CD4-positive, alpha-beta memory T cell (primary cell): ENCODE measurements at regions of chr5 and their contacts with region 1.

Region 1: DNA sequence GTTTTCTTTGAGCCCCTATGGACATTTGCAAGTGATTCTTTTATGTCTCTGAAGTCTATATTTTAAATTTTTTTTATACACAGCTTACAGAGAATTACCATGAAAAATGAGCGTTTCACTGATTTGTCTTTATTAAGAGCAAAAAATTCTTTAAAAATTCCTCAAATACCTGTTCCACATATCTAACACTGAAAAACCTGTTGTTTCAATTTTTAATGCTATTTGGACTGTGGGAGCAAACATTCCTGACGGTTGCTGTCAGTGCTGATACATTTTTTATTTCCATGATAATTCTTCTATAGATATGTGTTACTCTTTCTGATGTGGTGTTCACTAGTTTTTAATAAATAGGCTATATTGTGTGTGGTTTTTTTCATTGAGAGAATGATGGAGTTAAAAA is 199.8 kb downstream of the GDNF start:
- DNase-seq: no peak
- H3K4me3 ChIP-seq: no peak overlapping the region
- H3K4me3 Mint-ChIP-seq: no peak overlapping the region
- H3K27ac ChIP-seq: no peak overlapping the region
- H3K27ac Mint-ChIP-seq: no peak overlapping the region
- H3K4me1 ChIP-seq: no peaks in the 10 kb centered on the region
- H3K4me1 Mint-ChIP-seq: peaks cover 0 to 7% (median 2%) of the 10 kb centered on the region in 4 donors
- H3K27me3 ChIP-seq: no peaks in the 10 kb centered on the region
- H3K27me3 Mint-ChIP-seq: no peaks in the 10 kb centered on the region

Region 2: GRCh38 chr5:37598733-37599132 is 41.4 kb before region 1 on chr5:
- CTCF ChIA-PET with region 1: no interaction called
- POLR2A ChIA-PET with region 1: no interaction called
- intact Hi-C with region 1: loop called (anchors 10 kb)
- DNase-seq: no peak
- H3K4me3 ChIP-seq: no peak overlapping the region
- H3K4me3 Mint-ChIP-seq: no peak overlapping the region
- H3K27ac ChIP-seq: no peak overlapping the region
- H3K27ac Mint-ChIP-seq: no peak overlapping the region
- H3K4me1 ChIP-seq: no peaks in the 10 kb centered on the region
- H3K4me1 Mint-ChIP-seq: peaks cover 4 to 11% (median 7%) of the 10 kb centered on the region in 4 donors
- H3K27me3 ChIP-seq: no peaks in the 10 kb centered on the region
- H3K27me3 Mint-ChIP-seq: no peaks in the 10 kb centered on the region